Posterior cingulate gyrus (tissue), 11 donors: ENCODE measurements at regions of chr18 and their contacts with region 1.

Region 1: GRCh38 chr18:12947355-12948041 is at the start of gene SEH1L:
- DNase-seq: peak; percentile 96 to 100 (median 99)

Region 2: GRCh38 chr18:12883684-12884405 is 63.7 kb before region 1 on chr18 and contains the start of gene PTPN2:
- intact Hi-C with region 1: loop called (anchors 2 kb)
- DNase-seq: peak; percentile 81 to 98 (median 92)

Region 3: DNA sequence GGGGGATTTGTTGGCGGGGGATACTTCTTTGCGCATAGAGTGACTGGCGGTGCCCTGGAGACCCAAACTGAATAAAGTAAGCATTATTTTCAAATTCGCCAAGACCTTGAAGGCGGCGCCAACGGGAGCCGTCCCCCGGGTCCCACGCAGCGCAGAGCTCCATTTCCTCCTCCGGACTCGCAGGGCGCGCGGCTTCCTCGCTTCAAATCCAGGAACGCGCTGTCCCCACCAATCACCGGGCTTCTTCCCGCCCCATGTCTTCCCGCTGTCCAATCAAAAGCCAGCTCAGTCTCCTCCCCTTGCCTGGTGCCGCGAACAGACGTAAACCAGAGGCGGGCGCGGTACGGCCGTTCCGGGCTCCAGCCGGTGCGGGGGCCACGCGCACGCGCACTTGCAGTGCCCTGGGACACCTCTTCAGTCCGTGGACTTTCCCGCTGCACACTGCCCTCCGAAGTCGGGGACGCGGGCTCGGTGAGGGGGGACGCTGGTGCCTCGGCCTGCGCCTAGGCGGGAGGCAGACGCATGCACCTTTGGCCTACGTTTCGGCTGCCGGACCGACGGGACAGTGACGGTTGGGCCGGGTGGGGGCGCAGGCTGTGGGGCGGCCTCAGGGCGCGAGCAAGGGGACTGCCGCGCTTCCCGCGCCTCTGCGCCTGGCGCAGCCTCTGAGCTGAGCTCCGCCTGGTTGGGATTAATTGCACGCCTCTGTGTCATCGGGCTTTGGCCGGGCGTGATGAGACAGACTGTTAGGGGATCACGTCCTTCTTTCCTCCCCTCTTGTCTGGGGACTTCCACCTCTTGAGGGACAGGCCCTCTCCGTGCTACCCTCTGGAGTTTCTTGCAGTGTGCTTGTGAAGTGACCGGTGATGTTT is 43.7 kb after region 1 on chr18 and contains the start of gene CEP192:
- intact Hi-C with region 1: loop called (anchors 1 kb)
- DNase-seq: peak; percentile 96 to 100 (median 97)